ENCODE measurements at regions of chr14 and their contacts with region 1.

Region 1: GRCh38 chr14:24806061-24806678 is 172.2 kb upstream of the GZMB start:
- DNase-seq: peak; percentile 4
- H3K4me3 ChIP-seq: no peak overlapping the region
- H3K27ac ChIP-seq: no peak overlapping the region
- H3K27me3 ChIP-seq: no peaks in the 10 kb centered on the region
- CTCF ChIP-seq: peak; percentile 83

Region 2: GRCh38 chr14:24794644-24795305 is 11.4 kb before region 1 on chr14:
- CTCF ChIA-PET with region 1: no interaction called
- POLR2A ChIA-PET with region 1: no interaction called
- DNase-seq: no peak
- H3K4me3 ChIP-seq: no peak overlapping the region
- H3K27ac ChIP-seq: no peak overlapping the region
- H3K27me3 ChIP-seq: no peaks in the 10 kb centered on the region
- CTCF ChIP-seq: no peak

Region 3: GRCh38 chr14:24816011-24816928 is 10.1 kb after region 1 on chr14:
- CTCF ChIA-PET with region 1: no interaction called
- POLR2A ChIA-PET with region 1: no interaction called
- DNase-seq: no peak
- H3K4me3 ChIP-seq: no peak overlapping the region
- H3K27ac ChIP-seq: no peak overlapping the region
- H3K27me3 ChIP-seq: no peaks in the 10 kb centered on the region
- CTCF ChIP-seq: no peak

Region 4: GRCh38 chr14:24965934-24966578 is 159.9 kb after region 1 on chr14:
- CTCF ChIA-PET with region 1: no interaction called
- POLR2A ChIA-PET with region 1: no interaction called
- DNase-seq: no peak
- H3K4me3 ChIP-seq: no peak overlapping the region
- H3K27ac ChIP-seq: no peak overlapping the region
- H3K27me3 ChIP-seq: no peaks in the 10 kb centered on the region
- CTCF ChIP-seq: no peak

Region 5: GRCh38 chr14:25042362-25043299 is 236.5 kb after region 1 on chr14:
- CTCF ChIA-PET with region 1: interaction called, 15 read pairs
- POLR2A ChIA-PET with region 1: no interaction called
- DNase-seq: no peak
- H3K4me3 ChIP-seq: no peak overlapping the region
- H3K27ac ChIP-seq: no peak overlapping the region
- H3K27me3 ChIP-seq: peaks cover 3% of the 10 kb centered on the region
- CTCF ChIP-seq: peak; percentile 59

Region 6: DNA sequence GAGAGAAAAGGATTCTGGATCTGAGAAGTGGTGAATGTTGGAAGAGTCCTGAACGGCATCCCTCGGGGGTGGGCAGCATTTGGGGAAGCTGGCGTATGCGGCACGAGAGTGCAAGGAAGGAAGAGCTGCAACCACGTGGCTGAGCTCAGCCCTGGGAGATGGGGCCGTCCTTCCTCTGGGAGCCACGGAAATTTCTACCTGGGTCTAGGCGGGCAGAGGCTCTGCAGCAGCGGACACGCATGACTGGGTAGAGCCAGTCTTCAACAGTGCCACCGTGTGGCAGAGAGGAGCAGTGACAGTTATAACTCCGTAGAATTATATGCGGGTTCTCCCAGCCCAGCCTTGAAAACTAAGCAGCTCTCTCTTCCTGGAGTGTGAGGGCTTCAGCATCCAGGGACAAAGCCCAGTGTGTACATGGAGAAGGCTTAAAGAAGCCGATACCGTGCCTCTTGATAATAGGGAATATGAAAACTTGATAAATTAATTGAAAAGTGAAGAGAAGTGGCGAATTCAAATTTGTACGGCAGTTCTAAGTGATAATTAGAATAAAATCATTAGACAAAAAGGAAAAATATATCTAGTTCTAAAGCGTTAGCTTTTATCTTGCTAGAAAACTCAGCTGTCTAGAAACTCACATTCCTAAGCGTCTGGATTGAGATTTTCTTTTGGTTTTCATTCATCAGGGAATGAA is 326.7 kb after region 1 on chr14:
- CTCF ChIA-PET with region 1: interaction called, 43 read pairs
- POLR2A ChIA-PET with region 1: no interaction called
- DNase-seq: no peak
- H3K4me3 ChIP-seq: no peak overlapping the region
- H3K27ac ChIP-seq: no peak overlapping the region
- H3K27me3 ChIP-seq: no peaks in the 10 kb centered on the region
- CTCF ChIP-seq: peak; percentile 67

Region 7: DNA sequence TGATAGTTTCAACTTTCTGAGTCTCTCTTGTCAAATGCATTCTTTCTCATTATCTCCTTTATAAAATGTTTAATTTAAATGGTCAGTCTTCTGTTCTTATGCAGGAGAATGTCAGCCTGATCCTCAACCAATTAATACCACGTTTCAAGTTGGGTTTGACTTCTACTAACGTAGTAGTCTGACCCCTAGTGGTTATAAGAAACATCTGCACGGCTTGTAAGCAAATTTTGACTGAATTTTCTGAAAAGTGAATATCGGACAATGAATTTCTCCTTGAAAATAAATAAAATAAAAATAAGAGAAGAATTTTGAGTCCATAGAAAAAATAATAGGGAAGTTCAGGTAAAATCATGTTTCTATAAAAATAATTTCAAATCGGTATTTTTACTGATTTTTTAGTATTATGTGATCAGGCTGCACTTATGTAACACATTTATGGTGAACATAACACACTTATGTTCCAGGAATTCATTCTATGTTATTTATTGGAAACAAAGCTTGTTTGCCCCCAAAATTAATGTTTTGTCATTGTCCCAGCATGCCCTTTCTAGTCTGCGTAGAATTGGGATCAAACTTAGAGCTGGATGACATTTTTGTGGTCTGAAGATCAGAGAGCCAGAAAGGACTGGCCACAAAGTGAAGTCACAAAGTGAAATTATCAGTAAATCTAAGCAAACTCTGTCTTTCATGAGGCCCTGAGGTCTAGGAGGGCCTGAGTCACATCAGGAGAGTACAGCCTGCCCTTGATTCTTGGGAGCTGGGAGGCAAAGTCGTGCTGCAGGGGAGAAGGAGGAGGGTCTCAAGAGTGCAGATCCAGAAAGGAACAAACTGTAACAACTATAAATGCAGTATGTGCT is 345.0 kb after region 1 on chr14:
- CTCF ChIA-PET with region 1: interaction called, 12 read pairs
- POLR2A ChIA-PET with region 1: no interaction called
- DNase-seq: no peak
- H3K4me3 ChIP-seq: no peak overlapping the region
- H3K27ac ChIP-seq: no peak overlapping the region
- H3K27me3 ChIP-seq: no peaks in the 10 kb centered on the region
- CTCF ChIP-seq: peak; percentile 70

Measured in AG04450 (cell line).